ENCODE measurements at regions of chr2 and their contacts with region 1.

Region 1: DNA sequence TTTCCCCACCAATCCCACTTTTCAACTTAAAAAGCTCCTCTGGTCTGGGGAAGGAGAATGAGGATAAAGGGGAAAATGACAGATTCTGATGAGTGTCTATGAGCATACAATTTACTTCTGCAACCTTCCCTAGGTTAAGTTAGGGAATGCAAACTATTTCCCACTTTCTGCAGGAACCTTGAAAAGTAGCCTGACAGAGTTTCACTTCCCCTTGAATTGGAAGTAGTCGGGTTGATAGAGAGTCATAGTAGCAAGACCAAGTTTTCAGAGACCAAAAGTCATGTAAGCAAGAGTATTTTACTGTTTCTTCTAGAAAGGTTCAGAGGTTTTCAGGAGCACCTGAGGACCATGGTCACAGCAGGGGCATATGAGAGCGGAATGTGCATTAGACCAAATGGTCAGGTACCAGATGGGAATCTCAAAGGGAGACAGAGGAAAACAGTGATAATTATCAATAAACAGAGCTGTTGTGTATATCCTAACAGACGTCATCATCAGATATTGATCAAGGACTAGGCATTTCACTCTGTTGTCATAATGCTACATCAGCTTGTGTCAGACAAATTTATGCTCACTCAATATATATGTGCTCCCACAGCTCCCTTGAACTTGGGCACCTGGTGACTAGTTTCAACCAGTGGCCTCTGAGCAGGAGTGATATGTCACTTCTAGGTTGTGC is 815.2 kb downstream of the CPS1 start:
- DNase-seq: no peak
- H3K4me3 ChIP-seq: no peak overlapping the region
- CTCF ChIP-seq: no peak

Region 2: GRCh38 chr2:211423030-211423429 is 51.4 kb after region 1 on chr2:
- in situ Hi-C with region 1: loop called (anchors 5 kb)
- DNase-seq: no peak
- H3K4me3 ChIP-seq: no peak overlapping the region
- CTCF ChIP-seq: no peak